Activated T-helper 1 cell treated with anti-CD3 and anti-CD28 coated beads, Interleukin-12 subunit alpha, Interleukin-12 subunit beta, Interleukin-2, Interleukin-4 antibody, amounts not matched to agents 30 ng/mL and 10 ng/mL and 1 ng/mL, durations not matched to agents 14 hours and 24 hours and 36 hours (primary cell): ENCODE measurements at regions of chr5 and their contacts with region 1.

Region 1: DNA sequence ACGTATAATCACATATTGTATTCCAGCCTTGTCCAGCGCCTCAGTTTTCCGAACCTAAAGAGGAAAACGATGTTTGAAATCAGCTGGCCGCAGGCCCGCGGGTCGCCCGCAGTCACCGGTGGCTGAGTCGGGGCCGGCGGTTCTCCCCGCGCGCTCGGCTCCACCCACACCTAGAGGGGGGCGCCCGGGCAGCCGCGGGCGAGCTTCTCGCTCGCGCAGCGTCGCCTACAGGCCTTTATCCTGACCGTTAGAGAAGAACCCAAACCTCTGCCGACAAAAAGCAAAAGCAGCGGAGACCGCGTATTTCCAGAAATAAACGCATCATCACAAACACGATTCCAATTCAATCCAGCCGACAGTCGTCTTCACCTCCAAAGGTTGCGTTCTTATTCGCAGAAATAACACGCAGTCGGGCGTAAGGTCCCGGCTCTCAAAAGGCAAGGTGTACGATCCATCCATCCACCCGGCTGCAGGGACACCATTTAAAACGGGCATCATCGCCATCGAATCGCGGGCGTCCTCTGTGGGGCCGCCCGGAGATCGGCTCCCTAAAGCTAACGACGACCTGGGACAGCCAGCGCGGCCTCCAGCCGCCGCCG is 680 bp upstream of the NIPBL start:
- DNase-seq: peak; percentile 72
- H3K4me3 Mint-ChIP-seq: peak overlapping the region; percentile 93
- H3K27ac Mint-ChIP-seq: peak overlapping the region; percentile 97
- H3K4me1 Mint-ChIP-seq: peaks cover 55% of the 10 kb centered on the region
- H3K27me3 Mint-ChIP-seq: peaks cover 2% of the 10 kb centered on the region

Region 2: DNA sequence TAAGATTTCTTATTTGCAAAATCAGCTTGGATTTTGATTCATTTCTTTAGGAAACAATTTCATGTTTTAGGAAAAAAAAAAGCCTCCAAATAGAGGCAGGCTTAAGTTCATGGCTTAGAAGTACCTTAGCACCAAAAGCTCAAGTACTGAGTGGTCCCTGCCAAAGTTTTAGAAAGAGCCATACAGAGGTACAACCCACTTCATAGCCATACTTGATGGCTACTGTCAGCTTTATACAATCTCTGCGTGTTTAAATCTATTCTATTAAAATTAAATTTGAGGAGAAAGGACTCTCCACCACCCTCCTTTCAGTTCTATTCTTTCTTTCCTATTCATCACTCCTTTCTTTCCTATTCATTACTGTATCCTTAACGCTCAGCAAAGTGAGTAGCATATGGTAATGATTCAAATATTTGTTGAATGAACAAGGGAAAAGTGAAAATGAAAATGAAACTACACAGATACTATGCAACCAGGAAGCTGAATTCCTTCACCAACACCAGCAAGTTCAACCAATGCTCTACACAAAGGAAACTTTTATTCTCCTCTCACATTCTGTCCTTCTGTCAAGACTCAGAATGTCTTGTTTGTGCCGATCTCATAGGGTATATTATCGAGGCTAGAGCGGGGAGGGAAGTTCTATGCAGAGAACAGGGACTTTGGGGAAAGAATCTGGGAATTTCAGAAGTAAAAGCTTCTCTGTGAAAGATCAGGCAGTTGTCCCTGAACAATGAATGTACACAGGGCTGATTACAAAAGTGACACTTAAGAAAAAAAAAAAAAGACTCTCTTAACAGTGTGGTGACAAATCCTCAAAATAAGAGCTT is 1396.8 kb before region 1 on chr5:
- intact Hi-C with region 1: loop called (anchors 5 kb)
- DNase-seq: peak; percentile 1
- H3K4me3 Mint-ChIP-seq: peak overlapping the region; percentile 66
- H3K27ac Mint-ChIP-seq: peak overlapping the region; percentile 86
- H3K4me1 Mint-ChIP-seq: peaks cover 12% of the 10 kb centered on the region
- H3K27me3 Mint-ChIP-seq: no peaks in the 10 kb centered on the region

Region 3: GRCh38 chr5:36241631-36242533 is 634.0 kb before region 1 on chr5 and contains the start of gene NADK2:
- intact Hi-C with region 1: loop called (anchors 1 kb)
- DNase-seq: peak; percentile 93
- H3K4me3 Mint-ChIP-seq: peak within 1 kb of the TSS; percentile 90
- H3K27ac Mint-ChIP-seq: peak within 1 kb of the TSS; percentile 96
- H3K4me1 Mint-ChIP-seq: peaks cover 39% of the 10 kb centered on the region
- H3K27me3 Mint-ChIP-seq: peaks cover 4% of the 10 kb centered on the region
- total RNA-seq, gene NADK2: 21.7 and 25.1 TPM in 2 replicates

Region 4: DNA sequence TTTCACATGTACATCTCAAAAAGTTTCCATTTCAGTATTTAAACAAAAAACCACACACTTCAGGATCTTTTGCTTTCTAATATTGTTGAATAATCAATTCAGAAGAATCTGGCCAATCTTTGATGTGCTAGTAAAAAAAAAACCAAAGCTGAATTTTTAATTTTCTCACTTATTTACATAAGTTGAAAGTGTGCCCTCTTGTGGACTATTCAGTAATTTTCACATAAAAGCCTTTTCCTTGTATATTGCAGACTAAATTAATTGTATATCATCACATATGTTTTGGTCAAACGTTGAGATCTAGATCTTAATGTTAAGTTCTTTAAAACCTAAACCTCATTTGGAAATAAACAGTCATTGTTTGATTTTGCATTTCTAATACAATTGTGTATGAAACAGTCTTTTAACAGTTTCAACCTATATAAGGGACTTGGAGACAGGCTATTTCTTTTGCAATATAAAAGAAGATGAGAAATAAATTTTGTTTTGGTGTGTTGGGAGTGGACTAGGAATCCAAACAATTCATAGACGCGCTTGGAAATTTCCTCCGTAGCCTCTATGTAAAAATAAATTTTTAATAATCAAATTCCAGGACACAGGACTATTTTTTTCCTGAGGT is 68.8 kb after region 1 on chr5:
- intact Hi-C with region 1: loop called (anchors 1 kb)
- DNase-seq: no peak
- H3K4me3 Mint-ChIP-seq: no peak overlapping the region
- H3K27ac Mint-ChIP-seq: no peak overlapping the region
- H3K4me1 Mint-ChIP-seq: peaks cover 5% of the 10 kb centered on the region
- H3K27me3 Mint-ChIP-seq: no peaks in the 10 kb centered on the region

Region 5: DNA sequence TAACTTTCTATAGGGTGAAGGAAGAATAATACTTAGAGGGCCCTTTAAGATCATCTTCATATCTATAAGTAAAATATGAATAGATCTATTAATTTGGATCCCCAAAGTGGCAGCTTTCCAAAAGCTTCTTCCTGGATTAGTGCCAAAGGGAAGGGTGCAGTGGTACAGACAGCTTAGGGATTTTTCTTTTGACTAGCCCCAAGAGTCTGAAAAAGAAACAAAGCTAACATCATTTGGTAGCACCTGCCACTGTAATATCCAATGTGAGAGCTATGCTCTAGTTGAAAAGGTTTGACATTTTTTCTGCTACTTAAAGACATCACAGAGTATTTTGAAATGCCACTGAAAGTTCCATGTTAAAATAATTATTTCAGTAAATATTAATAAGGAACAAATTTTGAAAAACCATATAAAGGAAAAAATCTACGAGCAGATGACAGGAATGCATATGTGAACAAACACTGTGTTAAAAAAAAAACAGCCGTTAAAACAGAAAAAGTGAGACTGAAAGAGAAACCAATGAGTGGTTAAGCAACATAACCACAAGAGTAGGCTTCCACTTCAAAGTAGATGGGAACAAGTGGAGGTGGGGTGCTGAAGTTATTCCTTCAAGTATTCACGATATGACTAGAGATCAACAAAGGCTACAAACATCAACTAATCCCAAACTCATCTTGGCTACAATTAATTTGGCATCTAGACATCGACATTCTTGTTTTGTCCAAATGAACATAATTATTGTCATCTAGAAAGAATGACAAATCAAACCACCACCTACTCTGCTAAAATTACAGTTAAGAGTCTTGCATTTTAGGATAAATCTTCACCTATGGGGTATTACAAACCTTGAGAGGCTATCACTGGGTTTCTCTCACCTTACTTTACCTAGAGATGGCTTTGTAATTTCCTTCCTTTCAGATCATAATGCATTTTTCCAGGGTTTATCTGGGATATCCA is 235.8 kb after region 1 on chr5:
- intact Hi-C with region 1: loop called (anchors 1 kb)
- DNase-seq: peak; percentile 43
- H3K4me3 Mint-ChIP-seq: peak overlapping the region; percentile 50
- H3K27ac Mint-ChIP-seq: peak overlapping the region; percentile 79
- H3K4me1 Mint-ChIP-seq: peaks cover 42% of the 10 kb centered on the region
- H3K27me3 Mint-ChIP-seq: no peaks in the 10 kb centered on the region

Region 6: GRCh38 chr5:37370864-37371726 is 495.2 kb after region 1 on chr5 and contains the start of gene NUP155:
- intact Hi-C with region 1: loop called (anchors 1 kb)
- DNase-seq: peak; percentile 87
- H3K4me3 Mint-ChIP-seq: peak within 1 kb of the TSS; percentile 94
- H3K27ac Mint-ChIP-seq: peak within 1 kb of the TSS; percentile 97
- H3K4me1 Mint-ChIP-seq: peaks cover 37% of the 10 kb centered on the region
- H3K27me3 Mint-ChIP-seq: no peaks in the 10 kb centered on the region
- total RNA-seq, gene NUP155: 72.5 and 82.1 TPM in 2 replicates

Region 7: DNA sequence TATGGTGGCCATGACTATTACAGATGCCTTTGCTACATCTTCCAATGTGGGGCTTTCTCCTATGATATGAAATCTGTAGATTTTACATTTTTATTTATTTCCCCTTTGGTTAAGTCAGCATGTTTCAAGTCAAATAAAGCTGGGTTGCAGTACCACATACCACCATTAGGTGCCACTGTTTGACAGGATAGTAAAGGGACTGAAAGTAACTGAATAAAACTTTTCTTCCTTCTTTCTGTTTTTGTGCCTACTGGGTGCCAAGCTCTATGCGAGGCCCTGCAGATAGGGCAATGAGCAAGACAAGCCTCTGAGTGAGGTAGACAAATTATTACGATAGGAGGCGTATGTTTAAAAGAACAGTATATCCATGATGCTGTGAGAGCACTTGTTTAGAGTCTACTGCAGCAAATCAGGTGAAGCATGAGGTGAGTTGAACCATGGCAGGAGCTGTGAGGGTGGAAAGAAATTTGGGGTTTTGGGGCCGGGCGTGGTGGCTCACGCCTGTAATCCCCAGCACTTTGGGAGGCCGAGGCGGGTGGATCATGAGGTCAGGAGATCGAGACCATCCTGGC is 899.1 kb after region 1 on chr5:
- intact Hi-C with region 1: no loop called
- DNase-seq: no peak
- H3K4me3 Mint-ChIP-seq: no peak overlapping the region
- H3K27ac Mint-ChIP-seq: no peak overlapping the region
- H3K4me1 Mint-ChIP-seq: no peaks in the 10 kb centered on the region
- H3K27me3 Mint-ChIP-seq: no peaks in the 10 kb centered on the region